ENCODE measurements at regions of chr2 and their contacts with region 1.

Region 1: GRCh38 chr2:196639180-196640030 is at the start of gene CCDC150:
- DNase-seq: peak; percentile 90
- ATAC-seq: peak; percentile 100
- H3K4me3 Mint-ChIP-seq: peak within 1 kb of the TSS; percentile 89
- H3K27ac Mint-ChIP-seq: peak within 1 kb of the TSS; percentile 53
- H3K4me1 Mint-ChIP-seq: peaks cover 14% of the 10 kb centered on the region
- H3K27me3 Mint-ChIP-seq: no peaks in the 10 kb centered on the region
- CTCF ChIP-seq: no peak
- total RNA-seq, gene CCDC150: 2.3 and 2.6 TPM in 2 replicates

Region 2: GRCh38 chr2:196798980-196799379 is 159.6 kb after region 1 on chr2:
- CTCF ChIA-PET with region 1: no interaction called
- POLR2A ChIA-PET with region 1: interaction called, 6 read pairs
- intact Hi-C with region 1: loop called (anchors 1 kb)
- DNase-seq: no peak
- ATAC-seq: no peak
- H3K4me3 Mint-ChIP-seq: peak overlapping the region; percentile 97
- H3K27ac Mint-ChIP-seq: peak overlapping the region; percentile 92
- H3K4me1 Mint-ChIP-seq: peaks cover 18% of the 10 kb centered on the region
- H3K27me3 Mint-ChIP-seq: peaks cover 7% of the 10 kb centered on the region
- CTCF ChIP-seq: no peak

Region 3: GRCh38 chr2:196823750-196824522 is 184.5 kb after region 1 on chr2:
- CTCF ChIA-PET with region 1: no interaction called
- POLR2A ChIA-PET with region 1: no interaction called
- intact Hi-C with region 1: no loop called
- DNase-seq: no peak
- ATAC-seq: no peak
- H3K4me3 Mint-ChIP-seq: no peak overlapping the region
- H3K27ac Mint-ChIP-seq: no peak overlapping the region
- H3K4me1 Mint-ChIP-seq: no peaks in the 10 kb centered on the region
- H3K27me3 Mint-ChIP-seq: peaks cover 34% of the 10 kb centered on the region
- CTCF ChIP-seq: no peak

Region 4: GRCh38 chr2:196926562-196927375 is 287.4 kb after region 1 on chr2 and contains the start of gene PGAP1:
- CTCF ChIA-PET with region 1: no interaction called
- POLR2A ChIA-PET with region 1: no interaction called
- intact Hi-C with region 1: loop called (anchors 5 kb)
- DNase-seq: peak; percentile 82
- ATAC-seq: peak; percentile 91
- H3K4me3 Mint-ChIP-seq: peak within 1 kb of the TSS; percentile 90
- H3K27ac Mint-ChIP-seq: peak within 1 kb of the TSS; percentile 86
- H3K4me1 Mint-ChIP-seq: peaks cover 21% of the 10 kb centered on the region
- H3K27me3 Mint-ChIP-seq: peaks cover 13% of the 10 kb centered on the region
- CTCF ChIP-seq: no peak
- total RNA-seq, gene PGAP1: 1.9 and 2.9 TPM in 2 replicates

Region 5: GRCh38 chr2:197515739-197516392 is 876.5 kb after region 1 on chr2 and contains the start of gene MOB4:
- CTCF ChIA-PET with region 1: no interaction called
- POLR2A ChIA-PET with region 1: no interaction called
- intact Hi-C with region 1: loop called (anchors 5 kb)
- DNase-seq: peak; percentile 96
- ATAC-seq: peak; percentile 95
- H3K4me3 Mint-ChIP-seq: peak within 1 kb of the TSS; percentile 96
- H3K27ac Mint-ChIP-seq: peak within 1 kb of the TSS; percentile 95
- H3K4me1 Mint-ChIP-seq: peaks cover 33% of the 10 kb centered on the region
- H3K27me3 Mint-ChIP-seq: no peaks in the 10 kb centered on the region
- CTCF ChIP-seq: no peak
- total RNA-seq, gene MOB4: 21.7 and 22.1 TPM in 2 replicates